ENCODE measurements at regions of chr19 and their contacts with region 1.

Region 1: GRCh38 chr19:48333467-48334384 is 8.4 kb downstream of the EMP3 start:
- DNase-seq: peak; percentile 88 to 97 (median 93)
- ATAC-seq: peak; percentile 55
- H3K4me3 ChIP-seq: peak overlapping the region; percentile 73 to 78
- H3K4me3 Mint-ChIP-seq: peak overlapping the region; percentile 94
- H3K27ac ChIP-seq: peak overlapping the region; percentile 65 to 98
- H3K27ac Mint-ChIP-seq: peak overlapping the region; percentile 96
- H3K4me1 ChIP-seq: peaks cover 41% of the 10 kb centered on the region
- H3K4me1 Mint-ChIP-seq: peaks cover 51% of the 10 kb centered on the region
- H3K27me3 ChIP-seq: no peaks in the 10 kb centered on the region
- H3K27me3 Mint-ChIP-seq: no peaks in the 10 kb centered on the region
- CTCF ChIP-seq: peak; percentile 79

Region 2: DNA sequence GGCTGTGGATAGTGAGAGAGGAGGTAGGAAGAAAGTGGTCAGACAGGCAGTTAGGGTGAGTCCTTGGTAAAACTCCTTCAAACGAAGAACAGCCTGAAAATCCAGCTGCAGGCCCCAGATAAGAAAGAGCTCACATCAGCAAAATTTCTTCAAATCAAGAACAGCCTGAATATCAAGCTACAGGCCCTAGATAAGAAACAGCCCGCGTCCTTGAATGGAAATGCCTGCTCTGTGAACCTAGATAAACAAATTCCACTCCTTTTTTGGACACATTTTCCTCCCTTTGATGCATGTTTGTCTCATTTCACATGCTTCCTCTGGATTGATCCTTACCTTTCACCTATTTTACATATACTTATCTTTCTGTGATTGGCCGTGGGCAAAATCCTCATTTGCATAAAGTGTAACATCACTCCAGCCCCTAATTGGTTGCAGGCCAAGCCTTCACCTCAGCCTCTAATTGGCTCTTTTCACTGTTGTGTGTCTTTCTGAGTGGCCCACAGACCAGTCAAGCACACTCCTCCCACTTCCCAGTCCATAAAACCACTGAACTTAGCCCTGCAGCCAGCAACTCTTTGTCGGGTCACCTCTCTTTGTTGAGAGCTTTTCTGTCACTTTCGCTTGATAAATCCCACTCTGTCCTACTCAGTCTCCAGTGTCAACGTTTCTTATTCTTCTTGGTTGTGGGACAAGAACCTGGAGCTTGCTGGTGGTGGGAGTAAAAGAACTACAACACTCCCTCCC is 441.6 kb before region 1 on chr19:
- CTCF ChIA-PET with region 1: no interaction called
- POLR2A ChIA-PET with region 1: no interaction called
- intact Hi-C with region 1: no loop called
- DNase-seq: no peak
- ATAC-seq: no peak
- H3K4me3 ChIP-seq: no peak overlapping the region
- H3K4me3 Mint-ChIP-seq: no peak overlapping the region
- H3K27ac ChIP-seq: no peak overlapping the region
- H3K27ac Mint-ChIP-seq: no peak overlapping the region
- H3K4me1 ChIP-seq: no peaks in the 10 kb centered on the region
- H3K4me1 Mint-ChIP-seq: no peaks in the 10 kb centered on the region
- H3K27me3 ChIP-seq: no peaks in the 10 kb centered on the region
- H3K27me3 Mint-ChIP-seq: peaks cover 3% of the 10 kb centered on the region
- CTCF ChIP-seq: no peak

Region 3: GRCh38 chr19:48271531-48272151 is 62.1 kb before region 1 on chr19:
- CTCF ChIA-PET with region 1: interaction called, 18 read pairs
- POLR2A ChIA-PET with region 1: interaction called, 3 read pairs
- intact Hi-C with region 1: loop called (anchors 1 kb)
- DNase-seq: peak in 3 of 9 experiments; percentile 10 to 55 (median 30)
- ATAC-seq: peak; percentile 23
- H3K4me3 ChIP-seq: peak overlapping the region; percentile 41 to 43
- H3K4me3 Mint-ChIP-seq: peak overlapping the region; percentile 82
- H3K27ac ChIP-seq: no peak overlapping the region
- H3K27ac Mint-ChIP-seq: no peak overlapping the region
- H3K4me1 ChIP-seq: peaks cover 4% of the 10 kb centered on the region
- H3K4me1 Mint-ChIP-seq: peaks cover 13% of the 10 kb centered on the region
- H3K27me3 ChIP-seq: peaks cover 0 to 14% of the 10 kb centered on the region in 2 experiments
- H3K27me3 Mint-ChIP-seq: peaks cover 12% of the 10 kb centered on the region
- CTCF ChIP-seq: no peak

Region 4: DNA sequence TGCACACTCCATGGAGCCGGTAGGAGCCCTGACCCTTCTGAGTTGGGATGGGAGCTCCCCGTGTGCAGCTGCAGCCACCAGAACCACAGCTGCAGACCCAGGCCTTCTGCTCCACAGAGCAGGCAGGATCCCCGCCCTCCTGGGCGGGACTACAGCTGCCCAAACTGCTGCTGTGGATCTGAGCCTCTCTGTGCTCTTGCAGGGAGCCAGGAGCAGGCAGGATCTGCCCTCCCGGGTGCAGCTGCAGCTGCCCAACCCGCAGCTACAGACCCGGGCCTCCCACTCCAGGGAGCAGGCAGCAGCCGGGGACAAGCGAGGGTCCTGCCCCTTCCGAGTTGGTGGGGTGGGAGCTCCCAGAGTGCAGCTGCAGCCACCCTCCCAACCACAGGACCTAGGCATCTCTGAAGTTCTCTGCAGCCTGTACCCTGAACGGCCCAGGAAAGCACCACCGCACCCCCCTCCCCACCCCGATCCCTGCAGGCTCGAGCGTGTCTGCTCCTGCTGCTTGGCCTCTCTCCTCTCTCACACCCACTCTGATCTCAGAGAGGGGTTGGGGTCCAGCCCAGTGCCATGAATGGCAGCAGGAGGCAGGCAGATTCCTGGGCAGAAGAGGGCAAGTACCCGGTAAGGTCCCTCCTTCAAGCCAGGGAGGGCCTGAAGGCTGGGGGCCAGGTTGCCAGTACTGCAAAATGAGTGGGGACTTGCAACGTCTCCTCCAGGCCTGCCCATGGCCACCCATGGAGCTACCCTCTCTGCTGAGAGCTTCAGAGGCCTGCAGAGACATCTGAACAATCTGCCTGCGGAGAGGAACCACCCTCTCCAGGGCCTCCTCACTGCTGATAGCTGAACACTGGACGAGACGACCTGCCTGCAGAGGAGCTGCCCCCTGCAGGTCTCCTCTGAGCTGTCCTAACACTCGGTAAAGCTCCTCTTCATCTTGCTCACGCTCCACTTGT is 24.8 kb before region 1 on chr19:
- CTCF ChIA-PET with region 1: interaction called, 232 read pairs
- POLR2A ChIA-PET with region 1: no interaction called
- intact Hi-C with region 1: loop called in 1 of 2 experiments (anchors 1 kb)
- DNase-seq: no peak
- ATAC-seq: no peak
- H3K4me3 ChIP-seq: no peak overlapping the region
- H3K4me3 Mint-ChIP-seq: no peak overlapping the region
- H3K27ac ChIP-seq: no peak overlapping the region
- H3K27ac Mint-ChIP-seq: no peak overlapping the region
- H3K4me1 ChIP-seq: no peaks in the 10 kb centered on the region
- H3K4me1 Mint-ChIP-seq: no peaks in the 10 kb centered on the region
- H3K27me3 ChIP-seq: no peaks in the 10 kb centered on the region
- H3K27me3 Mint-ChIP-seq: no peaks in the 10 kb centered on the region
- CTCF ChIP-seq: no peak

Region 5: DNA sequence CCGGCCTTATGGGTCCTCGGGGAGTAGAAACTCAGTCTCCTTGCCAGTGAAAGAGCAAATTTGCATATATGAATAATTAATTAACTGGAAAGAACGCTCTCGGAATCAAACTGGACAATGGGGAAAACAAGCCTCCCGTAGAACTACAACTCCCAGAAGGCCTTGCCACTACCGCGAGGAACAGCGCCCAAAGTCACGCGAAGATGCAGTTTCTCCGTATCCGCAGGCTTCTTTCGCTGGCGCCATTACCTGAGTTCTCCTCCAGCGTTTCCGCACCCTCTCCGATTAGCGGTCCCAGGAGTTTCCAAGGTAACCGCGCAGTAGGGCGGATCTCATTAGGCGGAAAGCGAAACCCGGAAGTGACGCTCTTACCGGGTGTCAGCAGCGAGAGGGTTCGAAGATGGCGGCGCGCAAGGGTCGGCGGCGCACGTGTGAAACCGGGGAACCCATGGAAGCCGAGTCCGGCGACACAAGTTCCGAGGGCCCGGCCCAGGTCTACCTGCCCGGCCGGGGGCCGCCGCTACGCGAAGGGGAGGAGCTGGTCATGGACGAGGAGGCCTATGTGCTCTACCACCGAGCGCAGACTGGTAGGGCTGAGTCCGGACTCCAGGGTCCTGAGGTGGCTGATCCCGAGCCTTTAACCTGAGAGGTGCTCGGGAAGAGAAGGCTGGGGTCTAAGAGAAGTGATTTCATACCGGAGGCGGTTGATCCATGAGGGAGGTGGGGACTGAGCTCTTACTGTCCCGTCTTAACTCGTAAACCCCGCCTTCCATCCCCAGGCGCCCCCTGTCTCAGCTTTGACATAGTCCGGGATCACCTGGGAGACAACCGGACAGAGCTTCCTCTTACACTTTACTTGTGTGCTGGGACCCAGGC is 112.1 kb after region 1 on chr19 and contains the start of gene GRWD1:
- CTCF ChIA-PET with region 1: interaction called, 4 read pairs
- POLR2A ChIA-PET with region 1: interaction called, 9 read pairs
- intact Hi-C with region 1: loop called in 1 of 2 experiments (anchors 1 kb)
- DNase-seq: peak; percentile 83 to 98 (median 91)
- ATAC-seq: peak; percentile 93
- H3K4me3 ChIP-seq: peak within 1 kb of the TSS; percentile 82 to 90
- H3K4me3 Mint-ChIP-seq: peak within 1 kb of the TSS; percentile 93
- H3K27ac ChIP-seq: peak within 1 kb of the TSS; percentile 79 to 89
- H3K27ac Mint-ChIP-seq: peak within 1 kb of the TSS; percentile 95
- H3K4me1 ChIP-seq: peaks cover 24% of the 10 kb centered on the region
- H3K4me1 Mint-ChIP-seq: peaks cover 40% of the 10 kb centered on the region
- H3K27me3 ChIP-seq: peaks cover 19 to 22% of the 10 kb centered on the region in 2 experiments
- H3K27me3 Mint-ChIP-seq: peaks cover 18% of the 10 kb centered on the region
- CTCF ChIP-seq: no peak
- total RNA-seq, gene GRWD1: 36.1 to 41.7 TPM

Region 6: GRCh38 chr19:48618916-48619691 is 285.4 kb after region 1 on chr19 and contains the starts of genes RPL18 and SPHK2:
- CTCF ChIA-PET with region 1: no interaction called
- POLR2A ChIA-PET with region 1: interaction called, 4 read pairs
- intact Hi-C with region 1: loop called in 1 of 2 experiments (anchors 5 kb)
- DNase-seq: peak; percentile 88 to 99 (median 94)
- ATAC-seq: peak; percentile 70
- H3K4me3 ChIP-seq: peak within 1 kb of the TSS; percentile 99
- H3K4me3 Mint-ChIP-seq: peak within 1 kb of the TSS; percentile 97
- H3K27ac ChIP-seq: peak within 1 kb of the TSS; percentile 92 to 94
- H3K27ac Mint-ChIP-seq: peak within 1 kb of the TSS; percentile 99
- H3K4me1 ChIP-seq: peaks cover 37% of the 10 kb centered on the region
- H3K4me1 Mint-ChIP-seq: peaks cover 57% of the 10 kb centered on the region
- H3K27me3 ChIP-seq: no peaks in the 10 kb centered on the region
- H3K27me3 Mint-ChIP-seq: no peaks in the 10 kb centered on the region
- CTCF ChIP-seq: no peak
- total RNA-seq, gene RPL18: 2,604 to 2,657 TPM
- total RNA-seq, gene SPHK2: 15.6 to 17.6 TPM